Body of pancreas (tissue), 4 donors: ENCODE measurements at regions of chr6 and their contacts with region 1.

Region 1: GRCh38 chr6:15491255-15491985 is 171.4 kb downstream of the DTNBP1 start:
- DNase-seq: peak; percentile 73 to 77 (median 74)
- ATAC-seq: peak; percentile 81
- H3K4me3 ChIP-seq: no peak overlapping the region
- H3K27ac ChIP-seq: peak overlapping the region in 1 of 4 donors; percentile 15
- H3K4me1 ChIP-seq: no peaks in the 10 kb centered on the region
- H3K27me3 ChIP-seq: no peaks in the 10 kb centered on the region
- CTCF ChIP-seq: peak; percentile 80 to 91 (median 87)
- POLR2A ChIP-seq: no peak

Region 2: DNA sequence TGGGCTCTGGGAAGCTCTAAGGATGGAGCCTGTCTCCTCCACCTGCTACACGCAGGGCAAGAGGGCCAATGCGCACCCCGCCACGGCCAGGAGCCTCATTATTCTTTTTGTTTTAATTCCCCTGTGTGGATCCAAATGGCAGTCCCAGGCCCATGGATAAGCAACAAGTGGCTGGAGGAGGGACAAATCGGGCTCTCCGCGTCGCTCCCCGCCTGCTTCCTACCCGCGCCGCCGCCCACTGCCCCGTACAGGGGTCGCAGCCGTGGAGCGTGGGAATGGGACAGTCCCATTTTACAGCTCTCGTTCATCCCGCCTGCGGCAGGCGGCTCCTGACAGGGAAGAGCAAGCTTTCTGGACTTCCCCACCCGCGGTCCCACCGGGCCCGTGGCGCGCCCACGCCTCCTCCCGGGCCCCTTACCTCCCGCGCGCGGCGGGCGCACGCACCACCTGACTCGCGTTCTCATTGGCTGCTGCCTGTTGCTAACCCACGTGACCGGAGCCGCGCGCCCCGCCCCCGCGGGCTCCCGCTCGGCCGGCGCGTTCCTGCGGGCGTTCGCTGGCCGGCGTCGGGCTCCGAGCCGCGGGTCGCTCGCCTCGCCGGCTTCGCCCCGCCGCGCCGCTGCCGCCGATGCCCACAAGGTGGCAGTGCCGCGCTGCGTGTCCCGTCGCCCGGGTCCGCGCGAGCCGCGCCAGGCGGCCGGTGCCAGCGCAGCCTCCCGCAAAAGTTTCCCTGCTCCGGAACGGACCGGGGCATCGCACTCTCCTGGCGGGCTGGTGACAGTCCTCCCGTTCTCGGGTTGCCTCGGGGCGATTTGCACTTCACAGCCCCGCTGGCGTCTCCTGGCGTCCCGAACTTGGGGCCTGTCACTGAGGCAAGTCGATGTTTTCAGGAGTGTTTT is 1280.5 kb before region 1 on chr6:
- intact Hi-C with region 1: loop called (anchors 10 kb)
- DNase-seq: peak; percentile 92 to 96 (median 94)
- ATAC-seq: peak; percentile 95
- H3K4me3 ChIP-seq: peak overlapping the region; percentile 20 to 63
- H3K27ac ChIP-seq: peak overlapping the region in 3 of 4 donors; percentile 65 to 82 (median 78)
- H3K4me1 ChIP-seq: peaks cover 26% of the 10 kb centered on the region
- H3K27me3 ChIP-seq: no peaks in the 10 kb centered on the region
- CTCF ChIP-seq: peak; percentile 31 to 100 (median 90)
- POLR2A ChIP-seq: peak in 2 of 3 donors; percentile 58 to 75

Region 3: DNA sequence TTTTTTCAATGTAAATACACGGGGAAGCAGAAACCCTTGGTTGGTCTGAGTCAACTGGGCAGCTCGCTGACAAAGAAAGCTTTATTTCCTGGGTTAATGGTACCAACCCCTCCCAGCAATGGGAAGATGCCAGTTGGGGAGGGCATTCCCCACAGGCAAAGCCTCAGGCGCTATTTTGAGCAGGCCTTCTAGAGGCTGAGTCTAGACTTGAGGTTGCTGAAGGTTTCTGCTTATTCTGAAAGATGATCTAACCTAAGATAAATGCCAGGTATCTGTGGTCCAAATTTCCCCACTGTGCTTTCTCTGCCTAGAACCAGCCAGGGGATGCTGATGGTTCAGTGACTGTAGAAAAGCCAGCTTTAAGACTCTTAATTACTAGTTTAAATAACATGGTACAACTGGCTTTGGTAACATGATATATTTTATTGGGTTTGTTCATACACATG is 418.1 kb before region 1 on chr6:
- intact Hi-C with region 1: no loop called
- DNase-seq: no peak
- ATAC-seq: no peak
- H3K4me3 ChIP-seq: no peak overlapping the region
- H3K27ac ChIP-seq: no peak overlapping the region
- H3K4me1 ChIP-seq: no peaks in the 10 kb centered on the region
- H3K27me3 ChIP-seq: no peaks in the 10 kb centered on the region
- CTCF ChIP-seq: no peak
- POLR2A ChIP-seq: no peak

Region 4: DNA sequence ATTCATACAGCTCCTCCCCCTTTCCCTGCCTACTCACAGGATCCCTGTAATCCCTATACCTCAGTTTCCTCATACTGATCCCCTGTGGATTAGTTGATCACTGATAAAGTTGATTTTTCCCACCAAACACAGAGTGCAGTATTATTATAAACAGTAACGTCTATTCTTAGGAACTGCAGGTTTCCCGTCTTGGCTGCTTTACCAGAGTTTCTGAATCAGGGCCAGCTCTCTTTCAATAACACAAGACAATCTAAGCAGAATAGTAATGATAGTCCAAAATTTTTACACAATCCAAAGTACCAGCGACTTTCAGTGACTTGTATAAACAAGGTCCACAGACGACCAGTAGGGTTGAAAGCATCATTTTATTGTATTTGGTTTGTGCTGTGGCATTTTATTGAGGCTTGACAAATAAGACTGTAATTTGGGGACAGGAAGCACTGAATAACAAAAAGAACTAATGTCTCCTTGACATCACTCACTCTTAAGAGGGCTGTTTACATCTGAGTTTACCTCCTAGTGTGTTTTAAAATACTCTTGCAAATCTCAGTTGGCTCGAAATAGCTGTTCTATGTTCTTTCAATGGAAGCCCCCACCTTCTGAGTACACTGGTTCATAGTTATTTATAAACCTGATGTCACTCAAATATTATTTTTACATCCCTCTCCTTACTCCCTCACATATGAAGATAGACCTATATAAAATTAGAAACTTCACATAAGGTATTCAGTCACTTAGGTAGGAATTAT is 251.6 kb before region 1 on chr6:
- intact Hi-C with region 1: no loop called
- DNase-seq: no peak
- ATAC-seq: no peak
- H3K4me3 ChIP-seq: no peak overlapping the region
- H3K27ac ChIP-seq: no peak overlapping the region
- H3K4me1 ChIP-seq: peaks cover 6% of the 10 kb centered on the region
- H3K27me3 ChIP-seq: no peaks in the 10 kb centered on the region
- CTCF ChIP-seq: no peak
- POLR2A ChIP-seq: no peak

Region 5: GRCh38 chr6:15744818-15745402 is 253.5 kb after region 1 on chr6:
- intact Hi-C with region 1: no loop called
- DNase-seq: no peak
- ATAC-seq: no peak
- H3K4me3 ChIP-seq: no peak overlapping the region
- H3K27ac ChIP-seq: no peak overlapping the region
- H3K4me1 ChIP-seq: no peaks in the 10 kb centered on the region
- H3K27me3 ChIP-seq: no peaks in the 10 kb centered on the region
- CTCF ChIP-seq: no peak
- POLR2A ChIP-seq: no peak